ENCODE measurements at regions of chrX and their contacts with region 1.

Region 1: GRCh38 chrX:120603707-120604360 is at the start of gene MCTS1:
- DNase-seq: peak; percentile 52
- ATAC-seq: peak; percentile 91
- H3K4me3 Mint-ChIP-seq: peak within 1 kb of the TSS; percentile 93
- H3K27ac Mint-ChIP-seq: peak within 1 kb of the TSS; percentile 94
- H3K4me1 Mint-ChIP-seq: peaks cover 8% of the 10 kb centered on the region
- H3K27me3 Mint-ChIP-seq: no peaks in the 10 kb centered on the region
- CTCF ChIP-seq: no peak
- total RNA-seq, gene MCTS1: 45.1 and 49.8 TPM in 2 replicates

Region 2: DNA sequence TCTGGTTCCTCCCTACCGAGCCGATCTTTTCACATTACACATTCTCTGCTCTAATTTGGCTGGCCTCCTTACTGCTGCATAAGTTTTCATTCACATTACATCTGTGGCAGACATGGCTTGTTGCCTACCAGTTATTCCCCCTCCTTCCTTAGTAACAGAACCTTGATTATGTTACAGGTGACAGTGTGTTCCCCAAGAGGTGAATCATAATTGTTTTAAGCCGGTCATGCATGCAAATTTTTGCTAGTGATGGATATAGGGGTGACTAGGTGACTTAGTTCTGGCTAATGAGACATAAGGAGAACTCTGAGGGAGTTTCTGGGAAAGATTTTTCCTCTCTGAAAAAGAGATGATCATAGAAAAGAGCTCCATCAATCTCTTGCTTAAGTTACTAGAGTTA is 126.4 kb before region 1 on chrX:
- CTCF ChIA-PET with region 1: no interaction called
- POLR2A ChIA-PET with region 1: no interaction called
- intact Hi-C with region 1: no loop called
- DNase-seq: no peak
- ATAC-seq: no peak
- H3K4me3 Mint-ChIP-seq: no peak overlapping the region
- H3K27ac Mint-ChIP-seq: no peak overlapping the region
- H3K4me1 Mint-ChIP-seq: no peaks in the 10 kb centered on the region
- H3K27me3 Mint-ChIP-seq: no peaks in the 10 kb centered on the region
- CTCF ChIP-seq: no peak

Region 3: GRCh38 chrX:120536061-120536460 is 67.8 kb before region 1 on chrX:
- CTCF ChIA-PET with region 1: no interaction called
- POLR2A ChIA-PET with region 1: interaction called, 3 read pairs
- intact Hi-C with region 1: loop called (anchors 2 kb)
- DNase-seq: no peak
- ATAC-seq: peak; percentile 49
- H3K4me3 Mint-ChIP-seq: no peak overlapping the region
- H3K27ac Mint-ChIP-seq: peak overlapping the region; percentile 64
- H3K4me1 Mint-ChIP-seq: peaks cover 23% of the 10 kb centered on the region
- H3K27me3 Mint-ChIP-seq: no peaks in the 10 kb centered on the region
- CTCF ChIP-seq: no peak

Region 4: DNA sequence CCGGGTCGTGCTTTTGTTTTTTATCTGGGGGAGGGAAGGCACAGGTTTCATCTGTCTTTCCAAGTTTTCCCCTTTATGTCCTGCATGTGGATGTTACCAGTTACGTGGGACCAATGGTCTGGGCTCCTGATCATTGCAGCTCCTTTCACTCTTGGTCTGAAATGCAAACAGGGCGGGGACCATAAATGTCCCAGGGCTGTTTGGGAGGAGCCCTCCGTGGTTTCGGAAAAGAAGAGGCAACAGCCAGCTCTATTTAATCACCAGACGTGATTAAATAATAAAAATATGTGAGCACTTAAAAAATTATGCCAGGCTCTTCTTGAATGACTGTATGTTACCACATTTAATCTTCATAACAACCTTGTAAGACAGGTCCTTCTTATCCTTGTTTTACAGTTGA is 56.8 kb after region 1 on chrX:
- CTCF ChIA-PET with region 1: no interaction called
- POLR2A ChIA-PET with region 1: no interaction called
- intact Hi-C with region 1: no loop called
- DNase-seq: no peak
- ATAC-seq: no peak
- H3K4me3 Mint-ChIP-seq: no peak overlapping the region
- H3K27ac Mint-ChIP-seq: no peak overlapping the region
- H3K4me1 Mint-ChIP-seq: peaks cover 4% of the 10 kb centered on the region
- H3K27me3 Mint-ChIP-seq: no peaks in the 10 kb centered on the region
- CTCF ChIP-seq: no peak

Region 5: GRCh38 chrX:120672390-120672789 is 68.6 kb after region 1 on chrX:
- CTCF ChIA-PET with region 1: no interaction called
- POLR2A ChIA-PET with region 1: no interaction called
- intact Hi-C with region 1: no loop called
- DNase-seq: no peak
- ATAC-seq: no peak
- H3K4me3 Mint-ChIP-seq: no peak overlapping the region
- H3K27ac Mint-ChIP-seq: no peak overlapping the region
- H3K4me1 Mint-ChIP-seq: peaks cover 2% of the 10 kb centered on the region
- H3K27me3 Mint-ChIP-seq: no peaks in the 10 kb centered on the region
- CTCF ChIP-seq: no peak

Region 6: DNA sequence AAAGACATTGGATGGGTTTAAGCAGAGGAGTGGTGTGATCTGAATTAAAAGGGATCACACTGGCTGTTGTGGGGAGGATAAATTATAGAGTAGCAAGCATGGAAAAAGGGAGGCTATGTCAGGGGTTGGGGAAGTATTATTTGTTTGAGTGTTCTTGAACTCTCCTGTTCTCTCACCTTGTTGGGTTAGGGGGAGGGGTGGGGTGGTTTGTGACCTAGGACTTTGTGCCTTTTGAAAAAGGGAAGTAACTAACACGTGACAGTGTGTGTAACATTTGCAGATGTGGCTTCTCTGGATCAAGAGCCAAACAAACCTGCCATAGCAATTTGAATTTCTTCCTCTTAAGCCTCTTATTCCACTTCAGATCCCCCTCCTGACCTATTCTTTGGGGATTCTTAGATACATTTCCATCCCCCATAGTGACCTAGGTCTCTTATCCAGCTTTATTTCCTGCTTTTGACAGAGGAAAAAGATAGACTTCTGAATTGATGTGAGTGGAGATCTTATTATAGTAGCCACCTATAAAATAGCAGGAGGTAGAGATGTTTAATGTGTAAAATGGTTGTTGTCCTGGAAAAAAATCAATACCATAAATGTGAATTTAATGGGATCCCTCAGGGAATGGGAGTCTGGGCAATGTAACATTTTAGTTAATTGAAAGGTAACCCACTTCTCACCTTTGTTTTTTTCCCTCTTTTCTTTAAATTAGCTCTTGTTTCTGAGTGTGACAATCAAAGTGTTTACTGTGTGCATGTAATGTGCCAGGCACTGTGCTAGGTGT is 151.4 kb after region 1 on chrX:
- CTCF ChIA-PET with region 1: no interaction called
- POLR2A ChIA-PET with region 1: interaction called, 6 read pairs
- intact Hi-C with region 1: loop called (anchors 1 kb)
- DNase-seq: peak; percentile 23
- ATAC-seq: peak; percentile 79
- H3K4me3 Mint-ChIP-seq: peak overlapping the region; percentile 3
- H3K27ac Mint-ChIP-seq: peak overlapping the region; percentile 90
- H3K4me1 Mint-ChIP-seq: peaks cover 88% of the 10 kb centered on the region
- H3K27me3 Mint-ChIP-seq: no peaks in the 10 kb centered on the region
- CTCF ChIP-seq: no peak

Region 7: DNA sequence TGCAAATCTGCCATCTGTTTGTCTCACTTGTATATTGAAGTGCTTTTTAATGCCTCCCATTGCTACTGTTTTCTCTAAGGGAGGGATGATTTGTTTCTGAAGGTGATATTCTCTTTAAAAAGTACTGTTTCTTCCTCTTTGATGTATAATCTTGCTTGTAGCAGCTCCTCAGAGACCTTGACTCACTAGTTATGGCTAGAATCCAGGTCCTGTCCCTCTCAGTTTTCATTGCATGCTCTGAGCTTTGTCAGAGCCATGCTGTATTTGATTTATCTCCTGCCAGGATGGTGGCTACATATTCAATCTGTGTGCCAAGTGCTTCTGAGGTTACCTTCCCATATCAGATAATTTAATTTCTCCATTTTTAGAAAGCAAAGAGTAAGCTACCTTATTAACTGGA is 499.5 kb after region 1 on chrX:
- CTCF ChIA-PET with region 1: no interaction called
- POLR2A ChIA-PET with region 1: no interaction called
- intact Hi-C with region 1: no loop called
- DNase-seq: no peak
- ATAC-seq: no peak
- H3K4me3 Mint-ChIP-seq: no peak overlapping the region
- H3K27ac Mint-ChIP-seq: no peak overlapping the region
- H3K4me1 Mint-ChIP-seq: no peaks in the 10 kb centered on the region
- H3K27me3 Mint-ChIP-seq: no peaks in the 10 kb centered on the region
- CTCF ChIP-seq: no peak

Measured in activated B cell treated with CpG ODN at 0.5 μM for 24 hours (primary cell).